ENCODE measurements at regions of chr7 and their contacts with region 1.

Region 1: DNA sequence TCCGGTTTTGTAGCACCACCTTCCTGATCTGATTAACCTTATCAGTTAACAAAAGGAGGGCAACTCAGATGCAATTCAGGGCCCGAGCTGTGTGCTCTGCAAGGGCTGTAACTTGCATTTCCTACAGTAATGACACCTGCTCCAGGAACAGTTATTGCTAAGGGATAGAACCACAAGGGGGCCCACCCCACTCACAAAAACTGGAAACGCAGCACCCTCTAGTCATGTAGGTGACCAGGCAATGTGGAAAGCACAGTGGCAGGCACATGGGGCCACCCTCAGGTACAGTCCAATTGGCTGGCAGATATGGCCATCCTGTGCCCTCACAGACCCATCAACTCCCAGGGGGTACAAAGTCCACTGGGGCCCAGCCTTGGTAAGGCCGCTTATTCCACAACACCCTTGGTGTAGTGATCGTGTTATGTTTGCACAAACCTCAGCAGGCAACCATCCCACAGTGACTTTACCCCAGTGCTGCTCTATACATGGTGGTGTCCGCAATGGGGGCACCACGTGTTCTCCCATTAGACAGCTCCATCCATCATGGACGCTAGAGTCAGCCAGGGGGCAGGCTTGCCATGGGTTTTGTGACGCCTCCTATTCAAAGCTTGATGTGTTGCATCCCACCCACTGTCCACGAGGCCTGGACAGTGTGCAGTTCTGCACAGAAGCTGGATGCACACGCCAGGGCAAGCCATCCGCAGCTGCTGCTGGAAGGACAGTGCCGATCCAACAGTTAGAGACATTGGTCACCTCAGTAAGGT is 9.4 kb downstream of the RNF133 start:
- DNase-seq: no peak
- H3K4me3 ChIP-seq: no peak overlapping the region
- H3K4me3 Mint-ChIP-seq: no peak overlapping the region
- H3K27ac ChIP-seq: no peak overlapping the region
- H3K27ac Mint-ChIP-seq: no peak overlapping the region
- H3K4me1 ChIP-seq: no peaks in the 10 kb centered on the region
- H3K4me1 Mint-ChIP-seq: no peaks in the 10 kb centered on the region
- H3K27me3 ChIP-seq: no peaks in the 10 kb centered on the region
- H3K27me3 Mint-ChIP-seq: no peaks in the 10 kb centered on the region

Region 2: DNA sequence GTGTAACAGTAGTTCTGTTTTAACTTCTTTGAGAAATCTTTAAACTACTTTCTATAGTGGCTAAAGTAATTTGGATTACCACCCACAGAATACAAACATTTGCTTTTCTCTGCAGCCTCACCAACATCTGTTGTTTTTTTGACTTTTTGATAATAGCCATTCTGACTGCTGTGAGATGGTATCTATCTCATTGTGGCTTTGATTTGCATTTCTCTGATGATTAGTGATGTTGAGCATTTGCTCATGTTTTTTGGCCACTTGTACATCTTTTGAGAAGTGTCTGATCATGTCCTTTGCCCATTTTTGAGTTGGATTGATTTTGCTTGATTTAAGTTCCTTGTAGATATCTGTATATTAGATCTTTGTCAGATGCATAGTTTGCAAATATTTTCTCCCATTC is 57.3 kb before region 1 on chr7:
- CTCF ChIA-PET with region 1: no interaction called
- POLR2A ChIA-PET with region 1: no interaction called
- intact Hi-C with region 1: loop called (anchors 2 kb)
- DNase-seq: no peak
- H3K4me3 ChIP-seq: no peak overlapping the region
- H3K4me3 Mint-ChIP-seq: no peak overlapping the region
- H3K27ac ChIP-seq: no peak overlapping the region
- H3K27ac Mint-ChIP-seq: no peak overlapping the region
- H3K4me1 ChIP-seq: no peaks in the 10 kb centered on the region
- H3K4me1 Mint-ChIP-seq: no peaks in the 10 kb centered on the region
- H3K27me3 ChIP-seq: no peaks in the 10 kb centered on the region
- H3K27me3 Mint-ChIP-seq: no peaks in the 10 kb centered on the region